Activated B cell treated with CpG ODN at 0.5 μM for 24 hours (primary cell): ENCODE measurements at regions of chr12 and their contacts with region 1.

Region 1: GRCh38 chr12:70121557-70121956 is 121.7 kb upstream of the CNOT2 start:
- DNase-seq: no peak
- ATAC-seq: no peak
- H3K4me3 Mint-ChIP-seq: no peak overlapping the region
- H3K27ac Mint-ChIP-seq: no peak overlapping the region
- H3K4me1 Mint-ChIP-seq: no peaks in the 10 kb centered on the region
- H3K27me3 Mint-ChIP-seq: no peaks in the 10 kb centered on the region
- CTCF ChIP-seq: no peak

Region 2: GRCh38 chr12:71954083-71954778 is 1832.7 kb after region 1 on chr12:
- CTCF ChIA-PET with region 1: no interaction called
- POLR2A ChIA-PET with region 1: no interaction called
- intact Hi-C with region 1: loop called (anchors 5 kb)
- DNase-seq: no peak
- ATAC-seq: no peak
- H3K4me3 Mint-ChIP-seq: no peak overlapping the region
- H3K27ac Mint-ChIP-seq: no peak overlapping the region
- H3K4me1 Mint-ChIP-seq: no peaks in the 10 kb centered on the region
- H3K27me3 Mint-ChIP-seq: peaks cover 12% of the 10 kb centered on the region
- CTCF ChIP-seq: no peak